Heart left ventricle (tissue), 16 donors: ENCODE measurements at regions of chr7 and their contacts with region 1.

Region 1: DNA sequence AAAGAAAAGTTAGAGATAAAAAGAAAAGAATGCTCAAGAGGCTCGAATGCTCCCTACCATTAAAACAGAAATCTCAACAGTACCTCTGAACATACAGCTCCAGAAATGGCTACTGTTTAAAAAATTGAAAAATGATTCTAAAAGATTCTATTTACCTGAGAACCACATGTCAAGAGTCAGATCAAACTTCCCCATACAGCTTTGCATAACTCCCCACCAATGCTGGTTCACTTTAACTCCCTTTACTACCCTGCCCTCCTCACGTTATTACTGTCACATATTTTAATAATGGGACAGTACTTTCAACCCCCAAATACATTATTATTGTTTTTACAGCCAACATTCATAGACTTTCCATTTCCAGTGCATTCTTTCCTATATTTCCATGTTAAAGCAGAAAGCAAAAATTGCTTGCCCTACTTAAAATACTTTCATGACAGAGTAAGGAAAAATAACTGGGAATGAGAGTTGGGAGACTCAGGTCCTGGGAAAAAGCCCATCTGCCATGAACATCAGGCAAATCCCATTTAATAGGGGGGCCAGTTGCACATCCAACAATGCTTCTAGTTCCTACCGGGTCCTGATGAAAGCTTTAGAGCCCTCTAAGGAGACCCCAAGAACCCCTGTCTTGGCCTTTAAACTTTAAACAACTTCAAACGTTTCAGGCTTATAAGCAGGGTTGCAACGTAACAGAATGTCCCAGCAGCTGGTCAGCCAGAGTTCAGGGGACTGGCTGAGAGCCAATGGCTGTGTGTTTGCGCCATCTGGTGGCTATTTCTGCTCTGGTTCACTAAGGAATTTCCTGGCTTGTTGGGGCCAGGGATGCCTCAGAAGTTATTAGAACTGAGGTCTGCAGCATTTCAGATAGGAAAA is 247.4 kb downstream of the ELMO1 start:
- DNase-seq: peak; percentile 80 to 85 (median 84)
- ATAC-seq: peak; percentile 83 to 90 (median 88)
- H3K4me3 ChIP-seq: no peak overlapping the region
- H3K27ac ChIP-seq: peak overlapping the region; percentile 4 to 82 (median 62)
- H3K4me1 ChIP-seq: peaks cover 0 to 48% (median 25%) of the 10 kb centered on the region in 12 donors
- H3K27me3 ChIP-seq: no peaks in the 10 kb centered on the region
- CTCF ChIP-seq: peak; percentile 77 to 93 (median 86)
- POLR2A ChIP-seq: no peak

Region 2: DNA sequence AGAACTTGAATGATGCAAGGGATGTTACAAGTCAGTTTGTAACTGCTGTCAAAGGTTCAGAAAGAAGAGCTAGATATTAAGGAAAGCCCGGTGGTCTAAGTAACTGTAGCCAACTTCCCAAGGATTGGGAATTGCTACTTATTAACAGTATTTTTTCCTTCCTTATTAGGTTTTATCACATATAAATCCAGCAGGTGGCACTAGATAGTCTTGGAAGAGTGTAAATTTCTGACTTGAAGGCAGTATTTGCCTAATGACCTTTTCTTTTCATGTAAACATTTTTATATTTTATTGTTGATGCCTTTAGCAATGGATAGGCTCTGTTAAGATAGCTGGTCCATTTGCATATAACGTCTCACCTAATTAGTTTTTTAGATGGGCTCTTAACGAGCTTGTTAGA is 760.4 kb before region 1 on chr7:
- intact Hi-C with region 1: loop called in 1 of 10 experiments (anchors 5 kb)
- DNase-seq: no peak
- ATAC-seq: no peak
- H3K4me3 ChIP-seq: no peak overlapping the region
- H3K27ac ChIP-seq: no peak overlapping the region
- H3K4me1 ChIP-seq: no peaks in the 10 kb centered on the region
- H3K27me3 ChIP-seq: no peaks in the 10 kb centered on the region
- CTCF ChIP-seq: peak in 9 of 12 donors; percentile 31 to 56 (median 38)
- POLR2A ChIP-seq: no peak

Region 3: DNA sequence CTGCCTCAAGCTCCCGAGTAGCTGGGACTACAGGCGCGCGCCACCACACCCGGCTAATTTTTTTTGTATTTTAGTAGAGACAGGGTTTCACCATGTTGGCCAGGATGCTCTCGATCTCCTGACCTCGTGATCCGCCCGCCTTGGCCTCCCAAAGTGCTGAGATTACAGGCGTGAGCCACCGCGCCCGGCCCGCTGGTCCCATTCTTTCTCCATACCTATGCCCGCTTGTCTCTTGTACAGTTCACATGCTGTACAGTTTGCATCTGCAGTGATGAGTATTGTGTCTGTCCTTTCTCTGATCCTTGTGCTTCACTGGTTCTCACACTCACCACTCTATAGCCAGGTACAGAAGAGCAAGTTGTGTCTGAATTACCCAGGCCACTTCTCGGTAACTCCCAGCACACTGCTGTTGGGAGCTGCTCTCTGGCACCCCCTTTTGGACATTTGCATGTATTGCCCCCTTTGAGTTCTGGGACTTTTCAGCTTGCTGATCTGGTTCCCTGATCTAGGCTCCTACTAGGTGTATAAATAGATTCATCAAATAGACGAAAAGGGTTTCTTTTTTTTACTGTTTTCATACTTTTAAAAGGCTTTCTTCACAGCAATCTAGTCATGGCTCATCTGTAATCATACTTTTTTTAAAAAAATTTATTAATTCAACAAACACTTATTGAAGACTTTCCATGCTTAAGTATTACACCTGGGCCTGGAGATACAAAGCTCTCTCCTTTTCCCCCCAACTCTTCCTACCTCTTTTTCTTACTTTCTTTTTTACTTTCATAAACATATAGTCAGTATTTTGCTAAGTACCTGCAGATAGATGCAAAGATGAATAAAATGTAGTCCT is 530.4 kb before region 1 on chr7:
- intact Hi-C with region 1: loop called in 2 of 10 experiments (anchors 10 kb)
- DNase-seq: peak in 3 of 5 donors; percentile 19 to 41 (median 35)
- ATAC-seq: peak in 3 of 4 donors; percentile 46 to 77 (median 48)
- H3K4me3 ChIP-seq: no peak overlapping the region
- H3K27ac ChIP-seq: no peak overlapping the region
- H3K4me1 ChIP-seq: no peaks in the 10 kb centered on the region
- H3K27me3 ChIP-seq: no peaks in the 10 kb centered on the region
- CTCF ChIP-seq: peak; percentile 63 to 89 (median 78)
- POLR2A ChIP-seq: no peak

Region 4: GRCh38 chr7:36986429-36987362 is 214.5 kb before region 1 on chr7:
- intact Hi-C with region 1: loop called in 3 of 10 experiments (anchors 5 kb)
- DNase-seq: peak; percentile 47 to 75 (median 50)
- ATAC-seq: peak in 3 of 4 donors; percentile 56 to 65 (median 60)
- H3K4me3 ChIP-seq: no peak overlapping the region
- H3K27ac ChIP-seq: no peak overlapping the region
- H3K4me1 ChIP-seq: peaks cover 0 to 19% (median 9%) of the 10 kb centered on the region in 12 donors
- H3K27me3 ChIP-seq: peaks cover 0 to 3% (median 0%) of the 10 kb centered on the region in 9 donors
- CTCF ChIP-seq: peak; percentile 62 to 87 (median 80)
- POLR2A ChIP-seq: no peak

Region 5: GRCh38 chr7:37218956-37219355 is 17.7 kb after region 1 on chr7:
- intact Hi-C with region 1: no loop called
- DNase-seq: peak in 4 of 5 donors; percentile 39 to 45 (median 41)
- ATAC-seq: peak; percentile 39 to 83 (median 68)
- H3K4me3 ChIP-seq: no peak overlapping the region
- H3K27ac ChIP-seq: peak overlapping the region in 6 of 12 donors; percentile 12 to 43 (median 24)
- H3K4me1 ChIP-seq: peaks cover 0 to 40% (median 23%) of the 10 kb centered on the region in 12 donors
- H3K27me3 ChIP-seq: no peaks in the 10 kb centered on the region
- CTCF ChIP-seq: no peak
- POLR2A ChIP-seq: no peak

Region 6: DNA sequence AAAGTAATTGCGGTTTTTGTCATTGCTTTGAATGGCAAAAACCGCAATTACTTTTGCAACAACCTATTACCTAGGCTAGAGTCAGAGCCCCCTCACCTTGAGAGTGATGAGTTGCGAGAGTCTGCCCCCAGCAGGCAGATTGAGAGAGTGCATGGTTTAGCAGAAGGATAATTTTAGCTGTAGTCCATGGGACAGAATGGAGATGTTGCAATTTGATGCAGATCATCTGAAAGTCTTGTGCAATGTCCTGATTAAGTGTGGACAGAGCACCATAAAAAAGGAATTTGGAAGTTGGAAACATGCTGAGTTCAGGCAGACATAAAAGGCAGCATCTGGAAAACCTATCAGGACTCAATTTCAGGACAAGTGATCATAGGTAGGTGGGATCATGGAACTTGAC is 531.0 kb after region 1 on chr7:
- intact Hi-C with region 1: loop called in 1 of 10 experiments (anchors 10 kb)
- DNase-seq: peak in 4 of 5 donors; percentile 19 to 61 (median 38)
- ATAC-seq: peak; percentile 51 to 90 (median 78)
- H3K4me3 ChIP-seq: peak overlapping the region in 1 of 12 donors; percentile 31
- H3K27ac ChIP-seq: no peak overlapping the region
- H3K4me1 ChIP-seq: peaks cover 0 to 33% (median 12%) of the 10 kb centered on the region in 12 donors
- H3K27me3 ChIP-seq: no peaks in the 10 kb centered on the region
- CTCF ChIP-seq: peak; percentile 27 to 60 (median 46)
- POLR2A ChIP-seq: no peak